Endothelial cell of umbilical vein (primary cell): ENCODE measurements at regions of chr4 and their contacts with region 1.

Region 1: DNA sequence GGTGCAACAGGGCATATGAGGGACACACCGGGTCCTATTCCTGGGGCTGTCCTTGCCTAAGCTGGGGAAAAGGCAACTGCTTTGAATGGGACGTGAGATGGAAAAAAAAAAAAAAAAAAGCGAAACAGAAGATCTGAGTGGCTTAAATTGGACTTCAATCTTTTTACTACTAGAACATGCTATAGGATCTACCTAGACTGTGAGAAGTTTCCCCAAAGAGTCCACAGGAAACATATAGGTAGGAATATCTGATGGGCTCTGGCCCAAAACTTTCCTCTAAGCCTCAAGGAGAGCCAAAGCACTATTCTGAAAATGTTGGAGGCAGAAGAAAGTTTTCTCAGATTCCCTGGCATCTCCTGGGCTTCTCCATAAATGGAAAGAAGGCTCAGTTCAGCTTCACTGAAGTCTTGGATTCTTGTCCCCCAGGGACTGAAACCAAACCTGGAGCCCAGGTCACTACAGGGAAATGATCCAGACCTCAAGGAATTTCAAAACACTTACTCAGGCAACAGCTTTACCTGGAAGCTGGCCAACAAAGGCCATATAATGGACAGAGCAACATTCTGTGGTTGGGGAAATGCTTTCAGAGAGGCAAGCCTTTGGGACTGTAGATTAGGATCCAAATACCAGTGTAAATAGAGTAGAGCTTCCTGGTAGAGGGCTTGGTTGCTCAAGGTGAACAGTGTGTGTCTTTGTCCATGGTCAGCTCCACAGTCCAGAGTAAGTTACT is 56.9 kb upstream of the PROM1 start:
- DNase-seq: peak; percentile 86
- H3K4me3 ChIP-seq: no peak overlapping the region
- H3K27ac ChIP-seq: peak overlapping the region; percentile 22
- H3K4me1 ChIP-seq: peaks cover 11% of the 10 kb centered on the region
- H3K27me3 ChIP-seq: no peaks in the 10 kb centered on the region
- CTCF ChIP-seq: no peak
- POLR2A ChIP-seq: no peak

Region 2: GRCh38 chr4:15562114-15562513 is 578.6 kb before region 1 on chr4:
- CTCF ChIA-PET with region 1: no interaction called
- POLR2A ChIA-PET with region 1: no interaction called
- dilution Hi-C with region 1: no loop called
- intact Hi-C with region 1: loop called (anchors 10 kb)
- DNase-seq: no peak
- H3K4me3 ChIP-seq: no peak overlapping the region
- H3K27ac ChIP-seq: no peak overlapping the region
- H3K4me1 ChIP-seq: no peaks in the 10 kb centered on the region
- H3K27me3 ChIP-seq: no peaks in the 10 kb centered on the region
- CTCF ChIP-seq: no peak
- POLR2A ChIP-seq: no peak

Region 3: DNA sequence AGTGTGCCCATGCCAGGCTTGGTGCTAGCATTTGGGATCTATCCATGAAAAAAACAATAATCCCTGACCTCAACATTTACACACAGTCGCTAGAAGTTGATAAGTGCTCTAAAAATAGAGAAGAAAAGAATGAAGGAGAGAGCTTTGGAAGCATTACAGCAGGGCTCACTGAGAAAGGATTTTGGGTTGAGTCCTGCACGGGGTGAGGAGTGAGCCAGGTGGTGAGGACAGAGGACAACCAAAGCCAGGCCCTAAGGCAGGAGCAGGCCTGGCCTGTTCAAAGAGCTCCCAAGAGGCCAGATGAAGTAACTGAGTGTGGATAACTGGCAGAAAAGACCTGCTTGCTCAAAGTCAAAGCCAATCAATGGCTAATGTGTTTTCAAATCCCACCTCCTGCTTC is 36.2 kb before region 1 on chr4:
- CTCF ChIA-PET with region 1: no interaction called
- POLR2A ChIA-PET with region 1: no interaction called
- dilution Hi-C with region 1: no loop called
- intact Hi-C with region 1: no loop called
- DNase-seq: no peak
- H3K4me3 ChIP-seq: no peak overlapping the region
- H3K27ac ChIP-seq: no peak overlapping the region
- H3K4me1 ChIP-seq: no peaks in the 10 kb centered on the region
- H3K27me3 ChIP-seq: peaks cover 0 to 4% of the 10 kb centered on the region in 2 experiments
- CTCF ChIP-seq: no peak
- POLR2A ChIP-seq: no peak